Activated CD4-positive, alpha-beta T cell treated with anti-CD3 and anti-CD28 coated beads for 36 hours (primary cell): ENCODE measurements at regions of chr15 and their contacts with region 1.

Region 1: DNA sequence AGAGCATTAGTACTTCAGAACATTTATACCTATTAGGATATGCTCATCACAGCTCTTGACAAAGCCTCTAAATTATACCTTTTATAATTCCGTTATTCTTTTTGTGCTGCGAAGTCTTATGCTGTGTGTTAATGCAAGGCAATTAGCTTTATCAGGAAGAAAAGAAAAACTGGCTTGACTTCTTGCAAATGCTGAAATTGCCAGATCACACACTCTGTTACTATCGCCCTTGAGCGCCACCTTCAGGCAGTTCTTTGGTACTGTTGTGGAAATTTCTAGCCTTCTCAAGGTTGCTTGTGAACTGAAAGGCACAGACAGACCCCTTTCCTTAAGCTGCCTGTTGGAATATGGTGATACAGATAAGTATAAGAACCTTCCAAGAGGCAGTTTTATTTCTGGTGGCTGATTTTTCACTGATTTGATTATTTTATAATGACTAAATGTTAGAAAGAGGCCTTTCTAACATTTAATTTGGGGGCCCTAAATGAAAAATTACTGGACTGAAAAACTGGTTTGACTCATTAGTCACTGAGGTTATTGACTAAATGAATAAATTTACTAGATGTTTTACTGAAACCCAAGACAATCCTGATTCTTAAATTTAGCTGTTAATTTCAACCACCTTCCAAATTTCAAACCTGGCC is 126.2 kb upstream of the RASGRP1 start:
- DNase-seq: peak; percentile 89
- ATAC-seq: peak; percentile 16
- H3K4me3 Mint-ChIP-seq: no peak overlapping the region
- H3K27ac Mint-ChIP-seq: peak overlapping the region; percentile 42
- H3K4me1 Mint-ChIP-seq: peaks cover 78% of the 10 kb centered on the region
- H3K27me3 Mint-ChIP-seq: no peaks in the 10 kb centered on the region

Region 2: DNA sequence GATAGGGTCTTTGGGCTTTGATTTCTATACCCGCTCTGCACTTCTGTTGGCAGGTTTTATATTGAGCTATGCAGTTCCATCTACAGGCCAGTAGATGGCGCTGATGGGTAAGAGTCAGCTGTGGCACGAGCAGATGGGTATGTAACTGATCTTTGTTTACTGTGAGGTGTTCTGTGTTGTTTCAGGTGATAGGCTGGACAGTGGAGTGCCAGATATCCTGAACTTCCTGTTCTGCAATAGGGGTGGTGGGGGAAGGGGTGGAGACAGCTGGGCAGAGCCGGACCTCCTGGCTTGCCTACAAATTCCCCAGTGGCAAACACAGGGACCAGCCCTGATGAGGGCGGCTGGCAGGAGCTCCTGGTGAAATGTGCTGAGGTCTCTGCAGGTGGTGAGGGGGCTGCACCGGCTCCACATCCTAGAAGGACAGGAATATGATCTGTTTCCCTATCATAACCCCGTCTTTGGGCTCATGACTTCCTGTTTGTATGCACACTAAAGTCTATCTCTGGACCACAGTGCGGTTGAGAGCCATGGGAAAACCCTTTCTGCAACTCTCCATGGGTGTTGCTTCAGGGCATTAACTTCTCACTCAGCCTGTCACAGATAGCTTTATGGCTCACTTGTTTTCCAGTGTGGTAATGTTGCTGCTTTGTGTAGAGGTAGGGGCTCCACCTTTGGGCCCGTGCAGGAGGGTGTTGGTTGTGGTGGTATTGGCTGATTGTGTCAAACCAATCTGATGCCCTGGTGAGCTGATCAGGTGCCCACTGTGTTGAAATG is 250.3 kb before region 1 on chr15:
- CTCF ChIA-PET with region 1: interaction called, 154 read pairs
- POLR2A ChIA-PET with region 1: no interaction called
- intact Hi-C with region 1: loop called (anchors 1 to 2 kb)
- DNase-seq: peak; percentile 67
- ATAC-seq: peak; percentile 90
- H3K4me3 Mint-ChIP-seq: no peak overlapping the region
- H3K27ac Mint-ChIP-seq: peak overlapping the region; percentile 23
- H3K4me1 Mint-ChIP-seq: peaks cover 5% of the 10 kb centered on the region
- H3K27me3 Mint-ChIP-seq: peaks cover 14% of the 10 kb centered on the region

Region 3: GRCh38 chr15:38474155-38474757 is 216.6 kb before region 1 on chr15:
- CTCF ChIA-PET with region 1: interaction called, 70 read pairs
- POLR2A ChIA-PET with region 1: interaction called, 3 read pairs
- intact Hi-C with region 1: loop called (anchors 1 kb)
- DNase-seq: peak; percentile 30
- ATAC-seq: peak; percentile 97
- H3K4me3 Mint-ChIP-seq: no peak overlapping the region
- H3K27ac Mint-ChIP-seq: no peak overlapping the region
- H3K4me1 Mint-ChIP-seq: peaks cover 11% of the 10 kb centered on the region
- H3K27me3 Mint-ChIP-seq: no peaks in the 10 kb centered on the region

Region 4: GRCh38 chr15:38504680-38505467 is 185.9 kb before region 1 on chr15:
- CTCF ChIA-PET with region 1: interaction called, 20 read pairs
- POLR2A ChIA-PET with region 1: no interaction called
- intact Hi-C with region 1: no loop called
- DNase-seq: no peak
- ATAC-seq: no peak
- H3K4me3 Mint-ChIP-seq: no peak overlapping the region
- H3K27ac Mint-ChIP-seq: peak overlapping the region; percentile 64
- H3K4me1 Mint-ChIP-seq: peaks cover 32% of the 10 kb centered on the region
- H3K27me3 Mint-ChIP-seq: no peaks in the 10 kb centered on the region

Region 5: GRCh38 chr15:38536201-38536676 is 154.6 kb before region 1 on chr15:
- CTCF ChIA-PET with region 1: interaction called, 40 read pairs
- POLR2A ChIA-PET with region 1: no interaction called
- intact Hi-C with region 1: no loop called
- DNase-seq: no peak
- ATAC-seq: no peak
- H3K4me3 Mint-ChIP-seq: no peak overlapping the region
- H3K27ac Mint-ChIP-seq: peak overlapping the region; percentile 26
- H3K4me1 Mint-ChIP-seq: peaks cover 98% of the 10 kb centered on the region
- H3K27me3 Mint-ChIP-seq: no peaks in the 10 kb centered on the region

Region 6: GRCh38 chr15:38610748-38611147 is 80.1 kb before region 1 on chr15:
- CTCF ChIA-PET with region 1: interaction called, 100 read pairs
- POLR2A ChIA-PET with region 1: interaction called, 48 read pairs
- intact Hi-C with region 1: loop called (anchors 1 kb)
- DNase-seq: peak; percentile 78
- ATAC-seq: peak; percentile 52
- H3K4me3 Mint-ChIP-seq: peak overlapping the region; percentile 42
- H3K27ac Mint-ChIP-seq: peak overlapping the region; percentile 96
- H3K4me1 Mint-ChIP-seq: peaks cover 81% of the 10 kb centered on the region
- H3K27me3 Mint-ChIP-seq: no peaks in the 10 kb centered on the region

Region 7: DNA sequence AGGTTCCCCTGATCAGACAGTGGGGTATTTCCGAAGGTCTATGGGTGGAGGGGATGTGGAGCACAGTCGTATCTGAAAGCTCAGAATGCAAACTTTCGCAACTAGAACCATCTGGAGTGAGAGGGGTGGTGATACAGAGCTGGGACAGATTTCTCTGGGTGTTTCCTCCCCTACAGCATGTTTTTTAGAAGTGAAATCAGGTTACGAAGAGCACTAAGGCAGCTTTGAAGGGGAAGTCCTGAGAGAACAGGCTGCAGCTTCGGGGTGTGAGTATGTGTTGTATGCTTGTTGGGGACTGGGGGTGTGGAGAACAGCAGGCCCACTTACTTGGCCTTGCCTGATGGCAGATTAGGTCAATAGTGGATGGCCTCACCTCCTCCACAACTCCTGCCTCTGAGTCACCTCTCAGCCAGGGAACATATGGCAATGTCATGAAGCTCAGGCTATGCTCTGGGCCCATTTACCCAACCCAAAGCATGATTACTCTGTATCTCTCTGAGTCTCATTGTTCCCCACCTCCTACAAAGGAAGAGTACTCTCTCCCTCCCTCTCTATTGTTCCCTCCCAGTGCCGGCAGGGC is 19.0 kb before region 1 on chr15:
- CTCF ChIA-PET with region 1: interaction called, 205 read pairs
- POLR2A ChIA-PET with region 1: interaction called, 19 read pairs
- intact Hi-C with region 1: no loop called
- DNase-seq: peak; percentile 65
- ATAC-seq: peak; percentile 55
- H3K4me3 Mint-ChIP-seq: peak overlapping the region; percentile 60
- H3K27ac Mint-ChIP-seq: peak overlapping the region; percentile 98
- H3K4me1 Mint-ChIP-seq: peaks cover 75% of the 10 kb centered on the region
- H3K27me3 Mint-ChIP-seq: no peaks in the 10 kb centered on the region